ENCODE measurements at regions of chr9 and their contacts with region 1.

Region 1: GRCh38 chr9:35657546-35658136 is at the start of gene RMRP:
- DNase-seq: peak; percentile 91
- H3K4me3 ChIP-seq: peak within 1 kb of the TSS; percentile 70 to 82
- H3K27ac ChIP-seq: peak within 1 kb of the TSS; percentile 97 to 98
- H3K4me1 ChIP-seq: peaks cover 0 to 12% of the 10 kb centered on the region in 2 experiments; a peak in 1 of 4 replicates
- H3K27me3 ChIP-seq: no peaks in the 10 kb centered on the region
- CTCF ChIP-seq: 0 out of 2 replicates have a peak, but pooled peaks have one; percentile 27
- EP300 ChIP-seq: peak in 1 of 2 experiments; percentile 74; a peak in 2 of 4 replicates
- RAD21 ChIP-seq: no peak
- polyA plus RNA-seq, gene RMRP: 64.9 and 157 TPM in 2 replicates

Region 2: GRCh38 chr9:35603987-35604577 is 53.6 kb before region 1 on chr9:
- CTCF ChIA-PET with region 1: interaction called, 10 read pairs
- POLR2A ChIA-PET with region 1: no interaction called
- DNase-seq: peak; percentile 97
- H3K4me3 ChIP-seq: peak overlapping the region; percentile 70 to 79
- H3K27ac ChIP-seq: peak overlapping the region; percentile 77 to 93
- H3K4me1 ChIP-seq: peaks cover 14 to 21% of the 10 kb centered on the region in 2 experiments; a peak in 1 of 4 replicates
- H3K27me3 ChIP-seq: no peaks in the 10 kb centered on the region
- CTCF ChIP-seq: peak; percentile 93
- EP300 ChIP-seq: no peak
- RAD21 ChIP-seq: peak; percentile 60

Region 3: DNA sequence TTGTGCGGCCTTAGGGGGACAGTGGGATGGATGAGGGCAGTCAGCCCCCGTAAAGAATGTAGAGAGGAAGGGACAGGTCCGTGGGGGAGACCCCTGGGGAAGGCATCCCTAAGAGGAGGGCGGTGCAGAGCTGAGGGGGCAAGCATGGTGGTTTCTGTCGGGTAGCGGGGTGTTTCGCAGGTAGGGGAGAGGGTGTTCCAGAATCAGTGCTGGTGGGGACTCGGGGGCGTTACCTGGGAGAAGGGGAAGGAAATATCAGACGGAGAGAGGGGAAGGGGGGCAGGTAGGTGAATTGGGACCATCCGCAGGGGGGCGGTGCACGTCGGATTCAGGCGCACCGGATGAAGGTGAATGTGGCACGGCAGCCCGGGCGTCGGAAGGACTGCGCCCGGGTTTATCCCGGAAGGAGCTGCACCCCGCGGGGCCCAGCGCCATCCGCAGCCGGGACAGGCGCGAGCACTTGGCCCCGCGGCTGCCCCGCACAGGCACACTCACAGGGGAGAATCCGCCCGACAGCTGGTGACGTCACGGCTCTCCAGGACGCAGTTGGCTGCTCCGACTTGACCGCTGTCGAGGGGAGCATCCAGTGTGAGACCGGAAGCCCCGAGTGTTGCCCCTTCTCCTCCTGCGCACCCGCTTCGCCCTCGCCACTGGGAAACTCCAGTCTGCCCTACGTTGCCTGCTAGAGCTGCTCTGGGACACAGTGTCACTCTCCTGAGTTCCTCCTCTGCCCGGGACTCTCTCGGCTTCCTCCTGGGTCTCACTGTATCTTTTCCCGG is 40.8 kb before region 1 on chr9:
- CTCF ChIA-PET with region 1: interaction called, 20 read pairs
- POLR2A ChIA-PET with region 1: interaction called, 3 read pairs
- DNase-seq: peak; percentile 82
- H3K4me3 ChIP-seq: peak overlapping the region; percentile 27 to 41; a peak in 3 of 4 replicates
- H3K27ac ChIP-seq: no peak overlapping the region
- H3K4me1 ChIP-seq: peaks cover 0 to 12% of the 10 kb centered on the region in 2 experiments; a peak in 1 of 4 replicates
- H3K27me3 ChIP-seq: 0 out of 2 replicates have a peak, but pooled peaks cover 4% of the 10 kb centered on the region
- CTCF ChIP-seq: no peak
- EP300 ChIP-seq: no peak
- RAD21 ChIP-seq: no peak

Region 4: GRCh38 chr9:35675732-35676392 is 18.2 kb after region 1 on chr9:
- CTCF ChIA-PET with region 1: interaction called, 19 read pairs
- POLR2A ChIA-PET with region 1: interaction called, 4 read pairs
- DNase-seq: peak; percentile 96
- H3K4me3 ChIP-seq: peak overlapping the region; percentile 19 to 38; a peak in 2 of 4 replicates
- H3K27ac ChIP-seq: no peak overlapping the region; a peak in 1 of 4 replicates
- H3K4me1 ChIP-seq: peaks cover 0 to 13% of the 10 kb centered on the region in 2 experiments; a peak in 1 of 4 replicates
- H3K27me3 ChIP-seq: no peaks in the 10 kb centered on the region
- CTCF ChIP-seq: no peak
- EP300 ChIP-seq: no peak
- RAD21 ChIP-seq: no peak

Region 5: DNA sequence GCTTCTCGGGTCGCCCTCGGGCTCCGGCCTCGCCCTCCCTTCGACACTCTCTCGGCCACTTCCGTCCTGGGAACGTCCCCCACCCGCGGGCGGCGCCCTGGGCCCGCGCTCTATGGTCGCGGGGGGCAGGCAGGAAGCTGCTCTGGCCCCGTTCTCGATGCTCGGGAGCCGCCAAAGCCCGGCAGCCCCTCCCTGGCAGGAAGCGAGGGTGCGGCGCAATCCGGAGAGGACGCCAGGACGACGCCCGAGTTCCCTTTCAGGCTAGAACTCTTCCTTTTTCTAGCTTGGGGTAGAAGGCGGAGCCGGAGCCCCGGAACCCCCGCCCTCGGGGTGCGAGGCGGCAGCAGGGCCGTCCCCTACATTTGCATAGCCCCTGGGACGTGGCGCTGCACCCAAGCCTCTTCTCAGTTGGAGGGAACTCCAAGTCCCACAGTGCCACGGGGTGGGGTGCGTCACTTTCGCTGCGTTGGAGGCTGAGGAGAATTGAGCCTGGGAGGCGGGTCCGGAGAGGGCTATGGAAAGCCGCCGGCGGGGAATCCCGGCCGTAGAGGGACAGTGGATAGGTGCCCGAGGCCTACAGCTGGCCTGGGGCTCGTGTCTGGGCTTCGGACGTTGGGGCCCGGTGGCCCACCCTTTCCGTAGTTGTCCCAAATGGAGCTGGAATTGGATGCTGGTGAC is 74.6 kb after region 1 on chr9 and contains the starts of genes CREB3 and TLN1:
- CTCF ChIA-PET with region 1: interaction called, 26 read pairs
- POLR2A ChIA-PET with region 1: interaction called, 11 read pairs
- DNase-seq: peak; percentile 97
- H3K4me3 ChIP-seq: peak within 1 kb of the TSS; percentile 89 to 96
- H3K27ac ChIP-seq: peak within 1 kb of the TSS; percentile 88 to 94
- H3K4me1 ChIP-seq: peaks cover 34 to 49% of the 10 kb centered on the region in 2 experiments
- H3K27me3 ChIP-seq: no peaks in the 10 kb centered on the region
- CTCF ChIP-seq: peak; percentile 22; the same call in 1 of the 2 replicates
- EP300 ChIP-seq: peak in 1 of 2 experiments; percentile 62; a peak in 1 of 4 replicates
- RAD21 ChIP-seq: no peak
- polyA plus RNA-seq, gene CREB3: 33.9 and 38.6 TPM in 2 replicates
- polyA plus RNA-seq, gene TLN1: 91.8 and 115 TPM in 2 replicates